ENCODE measurements at regions of chr14 and their contacts with region 1.

Region 1: DNA sequence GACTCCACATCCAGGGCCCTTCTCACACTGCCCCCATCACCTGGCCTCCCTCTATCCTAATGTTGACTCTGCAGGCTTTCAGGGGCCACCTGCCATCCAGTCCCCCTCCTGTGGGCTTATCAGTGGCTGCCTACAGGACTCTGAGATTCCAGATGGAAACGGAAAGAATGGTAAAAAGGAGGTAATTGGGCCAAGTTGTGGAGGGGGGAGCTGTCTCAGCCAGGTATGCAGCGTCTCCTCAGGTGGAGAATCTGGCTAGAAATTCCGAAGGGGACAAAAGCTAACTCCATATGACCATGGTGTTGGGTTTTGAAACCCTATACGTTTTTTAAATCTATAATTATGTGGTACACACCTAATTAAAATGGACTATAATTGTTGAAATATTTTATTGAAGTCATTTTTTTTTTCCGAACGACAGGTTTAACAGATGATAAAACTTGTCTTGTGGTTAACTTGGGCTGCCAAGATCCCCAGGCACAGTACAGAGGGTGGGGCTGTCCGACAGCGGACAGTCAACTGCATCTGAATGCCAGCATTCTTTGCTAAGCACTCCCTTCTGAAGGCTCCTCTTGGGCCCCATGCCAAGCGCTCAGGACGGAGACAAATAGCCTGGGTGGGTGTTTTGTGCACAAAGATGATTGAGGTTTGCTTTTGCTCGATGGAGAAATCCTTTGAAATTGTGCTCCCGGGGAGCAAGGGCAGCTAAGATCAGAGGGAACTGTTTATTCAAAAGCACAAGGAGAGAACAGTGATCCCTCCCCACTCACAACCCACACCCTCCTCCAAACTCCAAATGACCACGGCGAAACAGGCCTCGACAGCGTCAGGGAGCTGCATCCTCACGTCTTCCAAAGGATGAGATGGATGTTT is 365.6 kb downstream of the BCL11B start:
- DNase-seq: peak; percentile 67
- H3K4me3 Mint-ChIP-seq: no peak overlapping the region
- H3K27ac Mint-ChIP-seq: no peak overlapping the region
- H3K4me1 Mint-ChIP-seq: peaks cover 32% of the 10 kb centered on the region
- H3K27me3 Mint-ChIP-seq: peaks cover 21% of the 10 kb centered on the region
- CTCF ChIP-seq: no peak

Region 2: GRCh38 chr14:98953551-98954348 is 47.4 kb after region 1 on chr14:
- CTCF ChIA-PET with region 1: no interaction called
- intact Hi-C with region 1: loop called (anchors 5 kb)
- DNase-seq: peak; percentile 53
- H3K4me3 Mint-ChIP-seq: no peak overlapping the region
- H3K27ac Mint-ChIP-seq: no peak overlapping the region
- H3K4me1 Mint-ChIP-seq: peaks cover 16% of the 10 kb centered on the region
- H3K27me3 Mint-ChIP-seq: peaks cover 18% of the 10 kb centered on the region
- CTCF ChIP-seq: no peak

Region 3: DNA sequence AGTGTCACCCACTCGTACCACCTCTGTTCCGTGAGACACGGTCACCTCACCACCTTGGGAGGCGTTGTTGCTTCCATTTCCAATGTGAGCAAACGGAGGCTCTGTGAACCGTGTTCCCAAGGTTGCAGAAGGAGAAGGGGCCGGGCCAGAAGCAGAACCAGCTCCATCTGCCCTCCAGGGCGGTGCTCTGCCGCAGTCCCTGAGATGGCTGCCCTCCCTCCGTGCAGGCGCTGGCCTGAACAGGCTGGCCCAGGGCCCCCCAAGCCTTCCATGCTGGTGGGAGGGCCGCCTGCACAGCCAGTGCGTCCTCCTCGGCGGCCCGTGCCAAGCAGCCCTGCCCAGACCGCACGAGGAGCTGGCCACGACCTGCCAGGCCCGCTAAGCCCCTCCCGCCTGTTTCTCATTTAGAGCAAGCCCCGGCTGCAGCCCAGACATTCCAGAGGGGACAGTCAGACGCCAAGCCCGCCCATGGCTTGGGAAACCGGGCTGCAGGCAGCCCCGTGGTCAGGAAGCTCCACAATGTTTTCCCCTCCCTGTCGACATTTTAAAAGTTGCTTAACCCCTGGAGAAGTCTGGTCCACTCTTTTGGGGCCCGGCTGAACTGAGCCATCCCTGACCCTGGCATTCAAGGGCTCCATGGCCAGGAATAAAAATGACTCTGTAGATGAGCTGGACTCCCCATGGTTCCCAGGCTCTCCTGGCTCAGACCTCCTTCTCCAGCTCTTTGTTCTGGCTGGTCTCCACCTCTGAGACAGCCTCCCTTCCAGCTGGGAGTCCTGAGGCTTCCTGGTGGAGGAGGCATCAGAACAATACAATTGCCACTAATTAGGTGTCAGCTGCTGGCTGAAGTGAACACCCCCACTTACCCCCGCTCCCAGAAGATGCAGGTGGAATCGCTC is 129.6 kb after region 1 on chr14:
- CTCF ChIA-PET with region 1: interaction called, 3 read pairs
- intact Hi-C with region 1: loop called (anchors 10 kb)
- DNase-seq: peak; percentile 82
- H3K4me3 Mint-ChIP-seq: peak overlapping the region; percentile 52
- H3K27ac Mint-ChIP-seq: no peak overlapping the region
- H3K4me1 Mint-ChIP-seq: peaks cover 10% of the 10 kb centered on the region
- H3K27me3 Mint-ChIP-seq: no peaks in the 10 kb centered on the region
- CTCF ChIP-seq: no peak

Measured in Calu3 (cell line).